ENCODE measurements at regions of chr1 and their contacts with region 1.

Region 1: GRCh38 chr1:241330619-241331327 is 26.2 kb downstream of the RGS7 start:
- DNase-seq: no peak
- ATAC-seq: peak; percentile 83
- H3K4me3 Mint-ChIP-seq: peak overlapping the region; percentile 67
- H3K27ac Mint-ChIP-seq: peak overlapping the region; percentile 84
- H3K4me1 Mint-ChIP-seq: peaks cover 34% of the 10 kb centered on the region
- H3K27me3 Mint-ChIP-seq: no peaks in the 10 kb centered on the region
- CTCF ChIP-seq: no peak

Region 2: DNA sequence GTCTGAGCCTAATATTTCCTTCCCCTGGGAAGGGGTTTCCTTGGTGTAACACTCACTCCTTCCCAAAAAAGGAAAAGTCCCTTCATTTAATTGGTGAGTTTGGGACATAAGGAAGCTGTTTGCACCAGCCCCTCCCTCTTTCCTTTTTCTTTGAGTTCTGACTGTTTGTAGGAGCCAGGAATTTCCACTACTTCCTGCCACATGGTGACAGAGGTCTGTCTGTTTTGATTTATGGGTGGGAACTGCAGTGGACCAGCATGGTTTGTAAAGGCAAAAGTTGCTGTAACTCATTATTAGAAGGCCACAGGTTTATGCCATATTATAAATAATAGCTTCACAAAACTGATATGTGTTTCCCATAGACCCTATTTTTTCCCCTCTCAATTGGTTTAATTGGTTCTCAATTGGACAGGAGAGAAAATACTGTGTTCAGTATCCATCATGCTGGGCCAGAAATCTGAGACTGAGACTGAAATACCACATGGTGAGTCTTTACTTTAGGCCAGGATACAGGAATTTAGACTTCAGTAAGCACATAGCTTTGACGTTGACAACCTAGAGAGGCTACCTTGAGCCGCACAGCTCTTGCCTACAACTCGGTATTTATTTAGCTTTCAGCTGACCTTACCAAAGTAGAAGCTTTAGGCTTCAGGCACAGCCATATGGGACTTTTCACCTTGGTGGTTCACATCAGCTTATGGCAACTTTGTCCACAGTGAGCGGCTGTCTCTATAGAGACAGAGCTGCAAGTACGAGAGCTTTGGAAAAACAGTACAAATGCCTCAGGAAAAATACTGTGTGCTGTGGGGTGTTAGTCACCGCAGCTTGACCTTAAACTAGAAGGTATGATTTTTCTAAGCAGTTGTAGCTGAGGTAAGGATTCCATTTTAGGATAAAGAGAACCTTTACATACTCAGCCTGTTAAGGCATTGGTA is 66.2 kb after region 1 on chr1:
- CTCF ChIA-PET with region 1: no interaction called
- POLR2A ChIA-PET with region 1: no interaction called
- intact Hi-C with region 1: no loop called
- DNase-seq: no peak
- ATAC-seq: no peak
- H3K4me3 Mint-ChIP-seq: no peak overlapping the region
- H3K27ac Mint-ChIP-seq: no peak overlapping the region
- H3K4me1 Mint-ChIP-seq: no peaks in the 10 kb centered on the region
- H3K27me3 Mint-ChIP-seq: peaks cover 3% of the 10 kb centered on the region
- CTCF ChIP-seq: no peak

Region 3: GRCh38 chr1:241423541-241424479 is 93.0 kb after region 1 on chr1:
- CTCF ChIA-PET with region 1: no interaction called
- POLR2A ChIA-PET with region 1: no interaction called
- intact Hi-C with region 1: loop called (anchors 1 kb)
- DNase-seq: peak; percentile 29
- ATAC-seq: peak; percentile 58
- H3K4me3 Mint-ChIP-seq: peak overlapping the region; percentile 76
- H3K27ac Mint-ChIP-seq: no peak overlapping the region
- H3K4me1 Mint-ChIP-seq: peaks cover 7% of the 10 kb centered on the region
- H3K27me3 Mint-ChIP-seq: peaks cover 37% of the 10 kb centered on the region
- CTCF ChIP-seq: no peak

Region 4: GRCh38 chr1:241485554-241485992 is 154.8 kb after region 1 on chr1:
- CTCF ChIA-PET with region 1: no interaction called
- POLR2A ChIA-PET with region 1: no interaction called
- intact Hi-C with region 1: loop called (anchors 5 kb)
- DNase-seq: no peak
- ATAC-seq: no peak
- H3K4me3 Mint-ChIP-seq: no peak overlapping the region
- H3K27ac Mint-ChIP-seq: no peak overlapping the region
- H3K4me1 Mint-ChIP-seq: peaks cover 6% of the 10 kb centered on the region
- H3K27me3 Mint-ChIP-seq: no peaks in the 10 kb centered on the region
- CTCF ChIP-seq: no peak